Activated CD4-positive, alpha-beta memory T cell treated with anti-CD3 and anti-CD28 coated beads for 36 hours (primary cell): ENCODE measurements at regions of chr15 and their contacts with region 1.

Region 1: DNA sequence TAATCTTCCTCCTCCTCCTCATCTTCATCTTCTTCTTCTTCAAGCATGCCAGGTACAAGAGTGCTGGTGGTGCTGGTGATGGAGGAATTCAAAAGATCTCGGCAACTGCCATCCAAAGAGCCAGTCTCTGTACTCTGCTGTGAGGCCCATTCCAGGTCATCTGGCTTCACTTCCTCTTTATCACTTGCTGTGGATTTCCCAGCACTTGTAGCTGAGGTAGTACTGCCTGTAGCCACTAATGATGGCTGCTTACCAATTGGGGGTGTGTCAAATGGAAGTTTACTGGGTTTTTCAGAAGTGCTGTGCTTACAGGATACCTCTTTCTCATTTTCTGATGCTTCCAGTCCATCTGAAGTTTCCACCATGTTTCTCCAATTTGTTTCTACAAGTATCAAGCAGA is 28.8 kb upstream of the SHC4 start:
- DNase-seq: no peak
- H3K4me3 Mint-ChIP-seq: no peak overlapping the region
- H3K27ac Mint-ChIP-seq: no peak overlapping the region
- H3K4me1 Mint-ChIP-seq: no peaks in the 10 kb centered on the region
- H3K27me3 Mint-ChIP-seq: no peaks in the 10 kb centered on the region

Region 2: GRCh38 chr15:48975472-48976419 is 16.8 kb before region 1 on chr15:
- CTCF ChIA-PET with region 1: interaction called, 12 read pairs
- POLR2A ChIA-PET with region 1: interaction called, 3 read pairs
- intact Hi-C with region 1: no loop called
- DNase-seq: peak; percentile 83
- H3K4me3 Mint-ChIP-seq: peak overlapping the region; percentile 39
- H3K27ac Mint-ChIP-seq: no peak overlapping the region
- H3K4me1 Mint-ChIP-seq: no peaks in the 10 kb centered on the region
- H3K27me3 Mint-ChIP-seq: peaks cover 19% of the 10 kb centered on the region

Region 3: DNA sequence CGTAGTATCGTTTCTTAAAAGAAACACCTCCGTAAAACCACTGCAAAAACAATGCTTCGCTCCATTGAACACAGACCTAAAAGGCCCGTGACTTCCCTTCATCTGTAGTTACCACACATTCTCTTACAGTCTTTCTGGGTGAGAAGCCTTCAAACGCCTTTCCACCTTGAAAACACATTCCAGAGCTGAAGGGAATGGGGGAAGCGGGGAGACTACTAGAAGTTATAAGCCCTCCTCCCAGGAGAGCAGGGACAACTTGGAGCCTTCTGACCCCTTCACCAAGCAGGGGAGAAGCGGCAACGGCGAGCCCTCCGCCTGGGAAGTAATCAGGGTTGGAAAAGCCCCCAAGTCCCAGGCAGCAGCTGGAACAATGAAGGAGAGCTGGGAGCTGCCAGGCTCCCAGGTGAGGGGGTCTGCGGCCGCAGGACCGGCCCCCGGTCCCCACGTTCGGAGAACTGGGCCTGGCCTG is 53.2 kb after region 1 on chr15:
- CTCF ChIA-PET with region 1: no interaction called
- POLR2A ChIA-PET with region 1: no interaction called
- intact Hi-C with region 1: no loop called
- DNase-seq: peak; percentile 21
- H3K4me3 Mint-ChIP-seq: peak overlapping the region; percentile 91
- H3K27ac Mint-ChIP-seq: peak overlapping the region; percentile 76
- H3K4me1 Mint-ChIP-seq: peaks cover 33% of the 10 kb centered on the region
- H3K27me3 Mint-ChIP-seq: no peaks in the 10 kb centered on the region

Region 4: DNA sequence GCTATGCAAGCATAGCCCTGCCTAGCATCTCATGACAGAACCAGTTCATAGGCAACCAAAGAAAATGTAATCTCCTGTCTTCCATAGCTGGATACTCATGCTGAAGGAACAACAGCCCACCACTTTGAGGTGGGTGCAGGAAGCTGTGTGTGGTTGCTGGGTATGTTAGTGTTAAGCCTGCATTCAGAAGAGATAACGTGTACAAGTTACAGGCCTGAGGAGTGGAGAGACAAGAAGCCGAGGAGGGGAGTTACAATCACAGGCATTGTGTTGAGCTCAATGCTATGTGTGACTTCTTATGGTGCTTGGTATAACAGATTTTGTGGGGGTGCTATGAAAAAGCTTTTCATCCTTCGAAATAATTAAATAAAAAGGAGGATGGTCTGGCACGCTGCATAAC is 96.5 kb after region 1 on chr15:
- CTCF ChIA-PET with region 1: no interaction called
- POLR2A ChIA-PET with region 1: no interaction called
- intact Hi-C with region 1: no loop called
- DNase-seq: no peak
- H3K4me3 Mint-ChIP-seq: no peak overlapping the region
- H3K27ac Mint-ChIP-seq: no peak overlapping the region
- H3K4me1 Mint-ChIP-seq: no peaks in the 10 kb centered on the region
- H3K27me3 Mint-ChIP-seq: no peaks in the 10 kb centered on the region